ENCODE measurements at regions of chr9 and their contacts with region 1.

Region 1: GRCh38 chr9:99140685-99141314 is 35.9 kb downstream of the TGFBR1 start:
- DNase-seq: peak in 4 of 5 donors; percentile 28 to 66 (median 48)
- H3K4me3 ChIP-seq: no peak overlapping the region
- H3K27ac ChIP-seq: no peak overlapping the region
- H3K4me1 ChIP-seq: no peaks in the 10 kb centered on the region
- H3K27me3 ChIP-seq: no peaks in the 10 kb centered on the region
- CTCF ChIP-seq: peak; percentile 84

Region 2: GRCh38 chr9:98848450-98849149 is 292.2 kb before region 1 on chr9:
- intact Hi-C with region 1: loop called (anchors 10 kb)
- DNase-seq: peak; percentile 86 to 96 (median 87)
- H3K4me3 ChIP-seq: peak overlapping the region in 2 of 3 donors; percentile 57 to 61
- H3K27ac ChIP-seq: no peak overlapping the region
- H3K4me1 ChIP-seq: no peaks in the 10 kb centered on the region
- H3K27me3 ChIP-seq: no peaks in the 10 kb centered on the region
- CTCF ChIP-seq: peak; percentile 90

Measured in kidney (tissue), 22 donors.